Activated B cell treated with CpG ODN at 0.5 μM for 24 hours (primary cell): ENCODE measurements at regions of chr16 and their contacts with region 1.

Region 1: DNA sequence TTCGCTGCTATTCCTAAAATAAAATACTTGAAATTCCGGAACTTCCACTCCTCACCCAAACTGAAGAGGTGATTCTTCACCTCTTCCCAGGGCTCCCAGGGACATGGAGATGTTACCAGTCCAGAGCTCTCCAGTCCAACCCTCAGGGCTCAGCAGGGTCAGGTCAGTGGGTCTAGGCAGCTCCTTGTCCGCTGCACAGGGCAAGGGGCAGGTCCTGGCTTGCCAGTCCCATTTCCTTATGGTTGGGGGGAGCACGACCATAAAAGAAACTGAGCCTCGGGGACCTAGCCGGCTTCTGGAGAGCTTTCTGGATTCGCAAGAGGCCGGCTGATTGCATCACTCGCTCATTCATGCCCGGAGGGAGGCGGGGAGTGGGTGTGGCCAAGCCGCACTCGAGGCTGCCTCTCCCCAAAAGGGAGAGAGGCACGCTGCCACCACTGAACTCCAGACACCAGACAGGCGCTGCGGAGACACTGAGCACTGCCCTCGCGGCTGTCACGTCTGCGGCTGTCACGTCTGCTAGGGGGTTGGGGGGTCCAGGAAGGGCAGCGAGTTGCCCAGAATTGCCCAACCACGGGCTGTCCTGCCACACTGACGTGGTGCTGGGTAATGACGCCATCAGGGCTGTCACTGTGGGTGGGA is 15.8 kb downstream of the SLC7A5 start:
- DNase-seq: peak; percentile 73
- ATAC-seq: peak; percentile 76
- H3K4me3 Mint-ChIP-seq: peak overlapping the region; percentile 70
- H3K27ac Mint-ChIP-seq: peak overlapping the region; percentile 71
- H3K4me1 Mint-ChIP-seq: peaks cover 44% of the 10 kb centered on the region
- H3K27me3 Mint-ChIP-seq: no peaks in the 10 kb centered on the region
- CTCF ChIP-seq: no peak

Region 2: GRCh38 chr16:87834623-87835407 is 18.7 kb before region 1 on chr16:
- CTCF ChIA-PET with region 1: interaction called, 10 read pairs
- POLR2A ChIA-PET with region 1: interaction called, 3 read pairs
- intact Hi-C with region 1: loop called (anchors 2 kb)
- DNase-seq: no peak
- ATAC-seq: no peak
- H3K4me3 Mint-ChIP-seq: no peak overlapping the region
- H3K27ac Mint-ChIP-seq: no peak overlapping the region
- H3K4me1 Mint-ChIP-seq: peaks cover 26% of the 10 kb centered on the region
- H3K27me3 Mint-ChIP-seq: no peaks in the 10 kb centered on the region
- CTCF ChIP-seq: no peak

Region 3: DNA sequence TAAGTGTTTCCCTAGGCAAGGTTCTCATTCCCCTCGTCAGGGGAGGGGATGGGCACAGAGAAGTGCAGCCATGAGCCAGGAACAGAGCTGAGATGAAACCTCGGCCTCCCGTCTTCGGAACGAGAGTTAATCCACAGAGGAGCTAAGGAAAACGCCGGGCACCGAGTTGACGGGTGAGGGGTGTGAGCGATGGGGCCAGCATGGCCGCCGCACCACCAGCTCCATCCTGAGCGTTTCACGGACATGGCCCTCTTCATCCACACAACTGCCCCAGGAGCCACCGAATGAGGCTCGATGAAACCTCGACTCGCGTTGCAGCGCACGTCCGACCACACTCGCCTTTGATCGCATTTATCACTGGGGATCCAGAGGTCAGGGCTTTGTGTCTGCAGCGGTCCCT is 61.3 kb after region 1 on chr16:
- CTCF ChIA-PET with region 1: interaction called, 6 read pairs
- POLR2A ChIA-PET with region 1: interaction called, 11 read pairs
- intact Hi-C with region 1: no loop called
- DNase-seq: no peak
- ATAC-seq: no peak
- H3K4me3 Mint-ChIP-seq: no peak overlapping the region
- H3K27ac Mint-ChIP-seq: no peak overlapping the region
- H3K4me1 Mint-ChIP-seq: no peaks in the 10 kb centered on the region
- H3K27me3 Mint-ChIP-seq: peaks cover 28% of the 10 kb centered on the region
- CTCF ChIP-seq: no peak

Region 4: DNA sequence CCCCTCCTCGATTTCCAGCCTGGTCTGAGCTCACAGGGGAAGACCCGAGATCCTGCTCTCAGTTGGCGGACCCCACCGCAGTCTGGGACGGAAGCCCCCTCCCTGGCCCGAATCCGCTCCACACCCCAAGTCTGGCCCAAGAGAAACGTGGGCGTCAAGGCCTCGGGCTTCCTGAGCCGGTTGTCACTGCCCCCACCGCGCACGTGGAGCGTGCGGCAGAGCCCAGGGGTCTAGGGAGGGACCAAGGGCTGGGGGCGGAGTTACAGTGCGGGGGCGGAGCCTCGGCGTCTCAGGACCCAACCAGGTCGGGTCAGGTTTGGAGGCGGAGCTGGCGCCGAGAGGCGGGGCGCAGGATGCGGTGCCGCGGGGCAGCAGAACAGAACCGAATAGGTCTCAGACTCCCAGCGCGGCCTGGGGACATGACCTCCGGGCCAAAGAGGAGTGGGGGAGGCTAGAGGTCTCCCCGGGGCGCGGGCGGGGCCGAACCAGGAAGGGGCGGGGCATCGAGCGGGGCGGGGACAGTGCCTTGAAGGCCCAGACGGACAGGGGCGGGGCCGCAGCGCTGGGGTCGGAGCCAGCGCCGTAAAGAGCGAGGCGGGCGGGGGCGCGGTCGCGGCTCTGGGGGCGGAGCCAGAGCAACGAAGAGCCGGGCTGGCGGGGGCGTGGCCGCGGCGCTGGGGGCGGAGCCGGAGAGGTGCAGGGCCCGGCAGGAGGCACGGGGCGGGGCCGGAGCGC is 599.1 kb after region 1 on chr16:
- CTCF ChIA-PET with region 1: no interaction called
- POLR2A ChIA-PET with region 1: no interaction called
- intact Hi-C with region 1: no loop called
- DNase-seq: peak; percentile 100
- ATAC-seq: peak; percentile 71
- H3K4me3 Mint-ChIP-seq: peak overlapping the region; percentile 87
- H3K27ac Mint-ChIP-seq: peak overlapping the region; percentile 80
- H3K4me1 Mint-ChIP-seq: peaks cover 57% of the 10 kb centered on the region
- H3K27me3 Mint-ChIP-seq: no peaks in the 10 kb centered on the region
- CTCF ChIP-seq: no peak